PC-3 (cell line): ENCODE measurements at regions of chr3 and their contacts with region 1.

Region 1: GRCh38 chr3:36149447-36149865 is 230.8 kb upstream of the STAC start:
- DNase-seq: peak; percentile 77
- ATAC-seq: peak; percentile 77
- H3K4me3 ChIP-seq: no peak overlapping the region
- H3K27ac ChIP-seq: peak overlapping the region; percentile 34
- H3K4me1 ChIP-seq: peaks cover 47% of the 10 kb centered on the region
- H3K27me3 ChIP-seq: no peaks in the 10 kb centered on the region
- CTCF ChIP-seq: no peak

Region 2: GRCh38 chr3:35678643-35679161 is 470.8 kb before region 1 on chr3:
- CTCF ChIA-PET with region 1: no interaction called
- POLR2A ChIA-PET with region 1: no interaction called
- intact Hi-C with region 1: no loop called
- DNase-seq: no peak
- ATAC-seq: no peak
- H3K4me3 ChIP-seq: no peak overlapping the region
- H3K27ac ChIP-seq: no peak overlapping the region
- H3K4me1 ChIP-seq: no peaks in the 10 kb centered on the region
- H3K27me3 ChIP-seq: peaks cover 3% of the 10 kb centered on the region; the same call in 1 of the 2 replicates
- CTCF ChIP-seq: no peak

Region 3: DNA sequence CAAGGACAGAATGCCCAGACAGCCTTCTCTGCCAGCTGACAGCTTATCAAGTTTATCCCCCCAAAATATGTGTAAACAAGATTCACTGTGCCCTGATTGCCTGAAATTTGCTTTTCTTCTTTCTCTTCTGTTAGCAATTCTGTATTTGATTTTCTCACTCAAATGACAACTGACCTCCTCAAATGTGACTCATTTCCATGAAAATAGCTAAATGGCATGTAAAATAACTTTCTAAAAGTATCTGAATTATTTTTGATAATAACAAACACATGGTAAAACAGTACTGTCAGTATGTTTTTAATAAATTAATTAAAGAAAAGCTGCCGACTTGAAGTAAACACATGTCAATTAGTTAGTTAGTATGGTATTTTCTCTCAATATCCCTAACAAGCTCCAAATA is 28.6 kb after region 1 on chr3:
- CTCF ChIA-PET with region 1: no interaction called
- POLR2A ChIA-PET with region 1: interaction called, 11 read pairs
- intact Hi-C with region 1: no loop called
- DNase-seq: no peak
- ATAC-seq: no peak
- H3K4me3 ChIP-seq: no peak overlapping the region
- H3K27ac ChIP-seq: no peak overlapping the region
- H3K4me1 ChIP-seq: peaks cover 10% of the 10 kb centered on the region; the same call in 1 of the 2 replicates
- H3K27me3 ChIP-seq: no peaks in the 10 kb centered on the region
- CTCF ChIP-seq: no peak

Region 4: DNA sequence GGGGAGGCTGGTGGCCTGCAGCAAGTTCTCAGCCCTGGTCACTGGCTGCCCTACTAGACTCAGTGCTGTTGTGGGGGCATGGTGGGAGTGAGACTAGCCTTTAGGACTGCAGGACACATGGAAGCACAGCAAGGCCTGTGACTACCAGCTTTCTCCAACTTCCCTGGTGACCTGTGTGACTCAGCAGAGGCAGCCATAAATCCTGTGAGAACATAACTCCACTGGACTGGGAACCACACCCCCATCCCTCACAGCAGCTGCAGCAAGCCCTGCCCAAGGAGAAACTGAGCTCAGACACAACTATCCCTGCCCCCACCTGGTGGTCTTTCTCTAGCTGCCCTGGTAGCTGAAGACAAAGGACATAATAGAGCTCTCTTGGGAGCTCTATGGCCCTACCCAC is 503.6 kb after region 1 on chr3:
- CTCF ChIA-PET with region 1: no interaction called
- POLR2A ChIA-PET with region 1: no interaction called
- intact Hi-C with region 1: no loop called
- DNase-seq: peak; percentile 58
- ATAC-seq: peak; percentile 37
- H3K4me3 ChIP-seq: no peak overlapping the region
- H3K27ac ChIP-seq: no peak overlapping the region
- H3K4me1 ChIP-seq: peaks cover 22% of the 10 kb centered on the region
- H3K27me3 ChIP-seq: no peaks in the 10 kb centered on the region
- CTCF ChIP-seq: no peak